ENCODE measurements at regions of chr3 and their contacts with region 1.

Region 1: GRCh38 chr3:5136211-5136918 is 14.3 kb downstream of the ARL8B start:
- DNase-seq: no peak
- H3K4me3 ChIP-seq: no peak overlapping the region
- H3K27ac ChIP-seq: no peak overlapping the region
- H3K4me1 ChIP-seq: no peaks in the 10 kb centered on the region
- H3K27me3 ChIP-seq: no peaks in the 10 kb centered on the region
- CTCF ChIP-seq: no peak

Region 2: DNA sequence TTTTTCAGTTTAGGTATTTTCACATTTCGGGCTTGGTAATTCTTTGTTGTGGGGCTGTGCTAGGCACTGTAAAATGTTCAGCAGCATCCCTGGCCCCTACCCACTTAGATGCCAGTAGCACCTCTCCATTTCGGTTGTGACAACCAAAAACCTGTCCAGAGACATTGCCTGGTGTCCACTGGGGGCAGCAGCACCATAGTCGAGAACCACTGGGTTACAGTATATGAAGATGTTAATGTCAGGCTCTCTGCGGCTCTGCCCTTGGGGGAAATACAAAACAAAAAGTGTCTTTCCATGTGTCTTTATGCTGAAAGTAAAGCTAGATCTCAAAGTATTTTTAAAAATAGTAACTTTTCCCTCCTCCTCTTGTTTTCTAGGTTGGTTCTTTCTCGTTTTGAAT is 466.0 kb before region 1 on chr3:
- CTCF ChIA-PET with region 1: no interaction called
- POLR2A ChIA-PET with region 1: no interaction called
- intact Hi-C with region 1: no loop called
- DNase-seq: no peak
- H3K4me3 ChIP-seq: no peak overlapping the region
- H3K27ac ChIP-seq: no peak overlapping the region
- H3K4me1 ChIP-seq: no peaks in the 10 kb centered on the region
- H3K27me3 ChIP-seq: no peaks in the 10 kb centered on the region
- CTCF ChIP-seq: peak; percentile 45; the same call in 1 of the 2 replicates

Region 3: GRCh38 chr3:5187156-5187919 is 51.0 kb after region 1 on chr3 and contains the start of gene EDEM1:
- CTCF ChIA-PET with region 1: no interaction called
- POLR2A ChIA-PET with region 1: interaction called, 11 read pairs
- intact Hi-C with region 1: no loop called
- DNase-seq: peak; percentile 73 to 98
- H3K4me3 ChIP-seq: peak within 1 kb of the TSS; percentile 78
- H3K27ac ChIP-seq: peak within 1 kb of the TSS; percentile 73
- H3K4me1 ChIP-seq: peaks cover 22% of the 10 kb centered on the region
- H3K27me3 ChIP-seq: no peaks in the 10 kb centered on the region
- CTCF ChIP-seq: no peak
- total RNA-seq, gene EDEM1: 53.5 and 55.9 TPM in 2 replicates

Region 4: GRCh38 chr3:5401002-5401401 is 264.6 kb after region 1 on chr3:
- CTCF ChIA-PET with region 1: interaction called, 12 read pairs
- POLR2A ChIA-PET with region 1: no interaction called
- intact Hi-C with region 1: no loop called
- DNase-seq: no peak
- H3K4me3 ChIP-seq: no peak overlapping the region
- H3K27ac ChIP-seq: no peak overlapping the region
- H3K4me1 ChIP-seq: no peaks in the 10 kb centered on the region
- H3K27me3 ChIP-seq: no peaks in the 10 kb centered on the region
- CTCF ChIP-seq: no peak

Region 5: DNA sequence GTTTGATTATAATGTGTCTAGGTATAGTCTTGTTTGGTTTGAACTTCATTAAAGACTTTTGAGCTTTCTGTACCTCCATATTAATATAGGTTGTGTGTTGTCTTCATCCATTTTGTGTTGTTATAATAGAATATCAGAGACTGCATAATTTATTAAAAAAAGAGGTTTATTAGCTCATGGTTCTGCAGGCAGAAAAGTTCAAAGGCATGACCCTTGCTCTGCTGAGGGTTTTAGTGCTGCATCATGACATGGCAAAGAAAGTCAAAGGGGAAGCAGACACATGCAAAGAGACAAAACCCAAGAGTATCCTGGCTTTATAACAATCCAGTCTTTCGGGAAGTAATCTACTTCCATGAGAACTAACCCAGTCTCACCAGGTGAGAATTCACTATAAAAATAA is 409.4 kb after region 1 on chr3:
- CTCF ChIA-PET with region 1: no interaction called
- POLR2A ChIA-PET with region 1: interaction called, 12 read pairs
- intact Hi-C with region 1: no loop called
- DNase-seq: no peak
- H3K4me3 ChIP-seq: no peak overlapping the region
- H3K27ac ChIP-seq: no peak overlapping the region
- H3K4me1 ChIP-seq: no peaks in the 10 kb centered on the region
- H3K27me3 ChIP-seq: no peaks in the 10 kb centered on the region
- CTCF ChIP-seq: no peak

Measured in PC-9 (cell line).